PC-9 (cell line): ENCODE measurements at regions of chr9 and their contacts with region 1.

Region 1: GRCh38 chr9:128818099-128818838 is at the start of gene ENDOG:
- DNase-seq: peak; percentile 90 to 100
- H3K4me3 ChIP-seq: peak within 1 kb of the TSS; percentile 58
- H3K27ac ChIP-seq: no peak within 1 kb of the TSS
- H3K4me1 ChIP-seq: peaks cover 7% of the 10 kb centered on the region; the same call in 1 of the 2 replicates
- H3K27me3 ChIP-seq: no peaks in the 10 kb centered on the region
- CTCF ChIP-seq: peak; percentile 90
- total RNA-seq, gene ENDOG: 28.6 and 47.9 TPM in 2 replicates

Region 2: DNA sequence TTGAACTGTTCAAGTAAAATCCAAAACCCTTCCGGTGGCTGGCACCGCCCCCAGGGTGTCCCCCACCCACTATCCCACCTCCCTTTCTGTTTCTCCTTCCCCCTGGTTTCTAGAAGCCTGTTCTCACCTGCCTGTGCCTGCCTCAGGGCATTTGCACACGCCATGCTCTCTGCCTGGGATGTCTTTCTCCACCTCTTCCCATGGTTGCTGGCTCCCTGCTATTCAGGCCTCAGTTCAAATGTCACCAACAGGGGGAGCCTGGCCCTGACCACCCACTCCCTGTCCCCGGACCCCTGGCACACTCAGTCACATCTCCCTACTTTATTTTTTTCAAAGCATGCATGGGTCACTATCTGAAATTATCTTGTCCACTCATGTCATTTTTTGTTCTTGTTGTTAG is 797.6 kb before region 1 on chr9:
- CTCF ChIA-PET with region 1: no interaction called
- POLR2A ChIA-PET with region 1: no interaction called
- intact Hi-C with region 1: no loop called
- DNase-seq: no peak
- H3K4me3 ChIP-seq: no peak overlapping the region
- H3K27ac ChIP-seq: no peak overlapping the region
- H3K4me1 ChIP-seq: 0 out of 2 replicates have a peak, but pooled peaks cover 6% of the 10 kb centered on the region
- H3K27me3 ChIP-seq: no peaks in the 10 kb centered on the region
- CTCF ChIP-seq: 0 out of 2 replicates have a peak, but pooled peaks have one; percentile 28

Region 3: GRCh38 chr9:128455849-128456612 is 362.2 kb before region 1 on chr9 and contains the start of gene ODF2:
- CTCF ChIA-PET with region 1: interaction called, 13 read pairs
- POLR2A ChIA-PET with region 1: no interaction called
- intact Hi-C with region 1: no loop called
- DNase-seq: peak; percentile 83 to 99
- H3K4me3 ChIP-seq: peak within 1 kb of the TSS; percentile 90
- H3K27ac ChIP-seq: no peak within 1 kb of the TSS
- H3K4me1 ChIP-seq: 0 out of 2 replicates have a peak, but pooled peaks cover 6% of the 10 kb centered on the region
- H3K27me3 ChIP-seq: no peaks in the 10 kb centered on the region
- CTCF ChIP-seq: no peak
- total RNA-seq, gene ODF2: 49.4 and 58.2 TPM in 2 replicates

Region 4: GRCh38 chr9:128723866-128724743 is 94.2 kb before region 1 on chr9 and contains the start of gene ZDHHC12:
- CTCF ChIA-PET with region 1: interaction called, 6 read pairs
- POLR2A ChIA-PET with region 1: interaction called, 3 read pairs
- intact Hi-C with region 1: loop called (anchors 10 kb)
- DNase-seq: peak; percentile 95 to 100
- H3K4me3 ChIP-seq: peak within 1 kb of the TSS; percentile 80
- H3K27ac ChIP-seq: no peak within 1 kb of the TSS
- H3K4me1 ChIP-seq: no peaks in the 10 kb centered on the region
- H3K27me3 ChIP-seq: no peaks in the 10 kb centered on the region
- CTCF ChIP-seq: no peak
- total RNA-seq, gene ZDHHC12: 102 and 133 TPM in 2 replicates

Region 5: GRCh38 chr9:128829477-128830251 is 11.4 kb after region 1 on chr9 and contains the start of gene SPOUT1:
- CTCF ChIA-PET with region 1: interaction called, 11 read pairs
- POLR2A ChIA-PET with region 1: interaction called, 4 read pairs
- intact Hi-C with region 1: no loop called
- DNase-seq: peak; percentile 79 to 96
- H3K4me3 ChIP-seq: peak within 1 kb of the TSS; percentile 99
- H3K27ac ChIP-seq: no peak within 1 kb of the TSS
- H3K4me1 ChIP-seq: peaks cover 9% of the 10 kb centered on the region
- H3K27me3 ChIP-seq: no peaks in the 10 kb centered on the region
- CTCF ChIP-seq: no peak
- total RNA-seq, gene SPOUT1: 59.6 and 75.5 TPM in 2 replicates

Region 6: GRCh38 chr9:129023036-129023907 is 205.0 kb after region 1 on chr9:
- CTCF ChIA-PET with region 1: interaction called, 5 read pairs
- POLR2A ChIA-PET with region 1: interaction called, 25 read pairs
- intact Hi-C with region 1: no loop called
- DNase-seq: peak; percentile 85 to 92
- H3K4me3 ChIP-seq: no peak overlapping the region
- H3K27ac ChIP-seq: peak overlapping the region; percentile 51
- H3K4me1 ChIP-seq: peaks cover 51% of the 10 kb centered on the region
- H3K27me3 ChIP-seq: no peaks in the 10 kb centered on the region
- CTCF ChIP-seq: no peak

Region 7: DNA sequence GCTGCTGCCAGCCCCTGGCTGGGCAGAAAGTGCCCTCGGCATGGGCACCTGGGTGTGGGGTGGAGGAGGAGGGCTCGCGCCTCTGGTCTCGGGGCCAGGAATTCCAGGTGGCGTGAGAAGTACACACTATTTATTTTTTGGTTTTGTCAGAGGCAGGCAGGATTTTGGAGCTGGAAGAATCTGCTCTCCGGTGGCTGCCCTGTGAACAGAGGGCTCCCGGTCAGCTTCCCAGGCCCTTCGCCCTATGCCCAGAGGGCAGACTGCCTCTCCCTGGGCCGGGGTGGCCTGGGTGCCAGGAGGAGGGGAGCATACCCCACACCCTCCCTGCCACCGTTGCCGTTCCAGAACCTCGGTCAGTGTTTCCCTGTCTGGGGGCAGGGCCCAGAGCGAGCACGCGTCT is 271.0 kb after region 1 on chr9:
- CTCF ChIA-PET with region 1: no interaction called
- POLR2A ChIA-PET with region 1: no interaction called
- intact Hi-C with region 1: no loop called
- DNase-seq: no peak
- H3K4me3 ChIP-seq: no peak overlapping the region
- H3K27ac ChIP-seq: no peak overlapping the region
- H3K4me1 ChIP-seq: no peaks in the 10 kb centered on the region
- H3K27me3 ChIP-seq: no peaks in the 10 kb centered on the region
- CTCF ChIP-seq: no peak

Region 8: DNA sequence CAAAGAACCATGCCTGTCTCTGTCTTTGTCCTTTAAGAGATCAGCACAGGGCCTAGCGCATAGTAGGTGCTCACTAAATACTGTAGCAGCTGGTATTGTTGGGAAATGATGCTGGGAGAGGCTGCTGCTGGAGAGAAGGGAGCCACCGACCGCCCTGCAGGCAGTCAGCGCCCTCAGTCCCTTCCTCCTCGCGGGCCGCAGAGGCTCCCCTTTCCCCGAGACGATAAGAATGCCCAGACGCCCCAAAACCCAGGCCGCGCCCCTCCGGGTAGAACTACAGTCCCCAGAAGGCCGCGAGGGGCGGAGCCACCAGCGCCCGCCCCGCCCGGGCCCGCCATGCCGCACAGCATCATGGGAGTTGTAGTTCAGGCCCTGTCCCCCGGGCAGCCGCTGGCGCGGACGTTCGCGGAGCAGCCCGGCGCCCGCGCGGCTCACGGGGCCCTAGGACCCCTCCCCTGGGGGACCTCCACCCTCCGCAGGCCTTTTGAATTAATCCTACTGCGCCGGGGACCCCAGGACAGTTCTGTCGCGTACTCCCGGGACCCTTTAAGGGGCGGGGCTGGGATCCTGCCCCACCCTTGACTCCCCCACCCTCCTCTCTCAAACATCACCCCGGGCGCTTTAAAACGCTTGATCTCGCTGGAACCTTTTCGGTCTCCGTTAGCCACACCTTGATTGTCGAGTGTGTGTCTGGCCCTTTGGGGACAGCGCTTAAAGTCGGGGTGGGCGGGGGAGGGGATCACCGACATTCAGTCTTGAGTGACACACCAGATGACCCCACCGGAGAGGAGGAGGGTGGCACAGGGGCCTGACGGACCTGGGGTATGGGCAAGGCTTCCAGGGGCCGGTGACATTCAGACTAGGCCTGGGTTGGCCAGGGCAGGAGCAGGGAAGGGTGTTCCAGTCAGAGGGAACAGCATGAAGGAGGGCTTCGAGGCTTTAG is 384.6 kb after region 1 on chr9:
- CTCF ChIA-PET with region 1: no interaction called
- POLR2A ChIA-PET with region 1: no interaction called
- intact Hi-C with region 1: no loop called
- DNase-seq: peak; percentile 61 to 93
- H3K4me3 ChIP-seq: peak overlapping the region; percentile 90
- H3K27ac ChIP-seq: peak overlapping the region; percentile 44; the same call in 1 of the 2 replicates
- H3K4me1 ChIP-seq: no peaks in the 10 kb centered on the region
- H3K27me3 ChIP-seq: no peaks in the 10 kb centered on the region
- CTCF ChIP-seq: no peak

Region 9: DNA sequence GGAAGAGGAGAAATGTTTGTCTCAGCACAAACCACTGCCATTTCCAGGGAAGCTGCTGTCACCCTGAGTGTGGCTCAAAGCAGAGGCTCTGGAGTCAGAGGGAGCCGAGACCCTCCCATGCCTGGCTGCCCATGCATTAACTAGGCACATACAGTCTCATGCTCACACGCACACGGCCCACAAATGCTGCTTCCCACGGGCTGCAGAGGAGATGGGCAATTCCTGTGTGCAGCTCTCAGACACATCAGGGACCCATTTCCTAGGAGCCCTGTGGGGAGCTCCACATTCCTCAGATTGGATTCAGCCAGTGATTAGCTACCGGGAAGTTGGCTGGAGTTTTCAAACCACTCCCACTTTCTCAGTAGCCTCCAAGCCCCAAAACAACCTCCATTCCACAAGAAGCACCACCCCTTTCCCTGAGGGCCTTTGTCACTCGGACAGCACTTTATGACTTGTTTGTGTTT is 943.7 kb after region 1 on chr9:
- CTCF ChIA-PET with region 1: interaction called, 14 read pairs
- POLR2A ChIA-PET with region 1: interaction called, 3 read pairs
- intact Hi-C with region 1: no loop called
- DNase-seq: peak; percentile 80 to 96
- H3K4me3 ChIP-seq: peak overlapping the region; percentile 23; the same call in 1 of the 2 replicates
- H3K27ac ChIP-seq: peak overlapping the region; percentile 97
- H3K4me1 ChIP-seq: peaks cover 60% of the 10 kb centered on the region
- H3K27me3 ChIP-seq: no peaks in the 10 kb centered on the region
- CTCF ChIP-seq: no peak